Dendritic cell treated with granulocyte-macrophage colony-stimulating factor and Interleukin-4, amounts not matched to agents 40 ng/mL and 50 ng/mL, for 4 days (primary cell): ENCODE measurements at regions of chr3 and their contacts with region 1.

Region 1: GRCh38 chr3:23916886-23917678 is at the starts of genes NKIRAS1 and RPL15:
- H3K4me3 Mint-ChIP-seq: peak within 1 kb of the TSS; percentile 74
- H3K27ac Mint-ChIP-seq: peak within 1 kb of the TSS; percentile 99
- H3K4me1 Mint-ChIP-seq: peaks cover 42% of the 10 kb centered on the region
- H3K27me3 Mint-ChIP-seq: no peaks in the 10 kb centered on the region

Region 2: DNA sequence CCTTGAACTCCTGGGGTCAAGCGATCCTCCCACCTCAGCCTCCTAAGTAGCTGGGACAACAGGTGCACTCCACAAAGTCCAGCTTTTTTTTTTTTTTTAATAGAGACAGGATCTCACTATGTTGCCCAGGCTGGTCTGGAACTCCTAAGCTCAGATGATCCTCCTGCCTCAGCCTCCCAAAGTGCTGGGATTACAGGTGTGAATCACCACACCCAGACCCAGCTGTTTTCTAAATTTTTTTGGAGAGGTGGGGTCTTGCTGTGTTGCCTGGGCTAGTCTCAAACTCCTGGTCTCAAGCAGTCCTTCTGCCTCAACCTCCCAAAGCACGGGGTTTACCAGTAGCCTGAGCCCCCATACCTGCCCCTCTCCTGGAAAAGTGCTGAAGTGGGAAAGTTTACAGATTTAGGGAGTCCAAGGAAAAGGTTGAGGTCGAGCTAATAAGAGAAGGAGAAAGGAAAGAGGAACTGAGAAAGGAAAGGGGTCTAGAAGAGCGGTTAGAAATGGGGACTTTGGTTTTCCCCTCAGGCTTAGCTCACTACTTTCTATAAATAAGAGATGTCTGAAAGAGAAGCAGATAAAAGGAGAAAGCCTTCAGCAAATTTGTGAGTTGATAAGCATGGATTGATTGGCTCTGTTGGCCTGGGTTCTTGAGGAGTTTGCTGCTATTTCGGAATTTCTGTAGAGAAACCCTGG is 87.7 kb before region 1 on chr3:
- intact Hi-C with region 1: no loop called
- H3K4me3 Mint-ChIP-seq: peak overlapping the region; percentile 22
- H3K27ac Mint-ChIP-seq: no peak overlapping the region
- H3K4me1 Mint-ChIP-seq: peaks cover 48% of the 10 kb centered on the region
- H3K27me3 Mint-ChIP-seq: no peaks in the 10 kb centered on the region

Region 3: GRCh38 chr3:23945903-23946751 is 29.0 kb after region 1 on chr3:
- intact Hi-C with region 1: loop called (anchors 1 kb)
- H3K4me3 Mint-ChIP-seq: peak overlapping the region; percentile 96
- H3K27ac Mint-ChIP-seq: peak overlapping the region; percentile 85
- H3K4me1 Mint-ChIP-seq: peaks cover 37% of the 10 kb centered on the region
- H3K27me3 Mint-ChIP-seq: peaks cover 29% of the 10 kb centered on the region